ENCODE measurements at regions of chr19 and their contacts with region 1.

Region 1: DNA sequence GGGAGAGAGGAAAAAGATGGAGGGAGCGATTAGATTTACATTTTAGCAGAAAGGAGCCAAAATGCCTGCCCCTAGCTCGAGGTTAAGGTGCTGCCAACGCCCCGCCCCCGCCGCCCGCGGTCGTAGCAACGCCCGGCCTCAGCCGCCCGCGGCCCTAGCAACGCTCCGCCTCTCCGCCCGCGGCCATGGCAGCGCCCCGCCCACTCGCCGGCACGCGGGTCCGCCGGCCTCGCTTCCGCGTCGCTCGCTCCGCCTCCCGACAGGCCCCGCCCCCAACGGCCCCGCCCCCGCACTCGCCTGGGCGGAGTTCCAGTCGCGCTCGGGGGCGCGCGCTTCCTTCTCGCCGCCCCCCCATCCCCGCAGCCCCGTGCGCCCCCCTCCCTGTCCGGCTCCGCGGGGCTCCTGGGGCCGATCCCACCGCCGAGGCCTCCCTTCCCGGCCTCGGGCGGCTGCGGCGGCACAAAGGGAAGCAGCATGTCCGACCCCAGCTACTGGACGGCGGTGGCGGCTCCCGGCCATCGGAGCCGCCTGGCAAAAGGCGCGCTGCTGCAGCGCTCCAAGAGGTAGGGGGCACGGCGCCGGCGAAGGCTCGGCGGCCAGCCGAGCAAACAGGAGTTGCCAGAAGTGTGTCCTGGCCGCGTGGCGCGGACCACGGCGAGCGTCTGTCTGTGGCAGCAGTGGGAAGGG is 20.3 kb downstream of the MAST3 start:
- DNase-seq: peak; percentile 97
- ATAC-seq: peak; percentile 79
- H3K4me3 Mint-ChIP-seq: peak overlapping the region; percentile 74
- H3K27ac Mint-ChIP-seq: peak overlapping the region; percentile 84
- H3K4me1 Mint-ChIP-seq: peaks cover 35% of the 10 kb centered on the region
- H3K27me3 Mint-ChIP-seq: no peaks in the 10 kb centered on the region

Region 2: GRCh38 chr19:17718947-17719711 is 398.7 kb before region 1 on chr19 and contains the start of gene MAP1S:
- CTCF ChIA-PET with region 1: no interaction called
- POLR2A ChIA-PET with region 1: no interaction called
- intact Hi-C with region 1: loop called in 1 of 2 experiments (anchors 1 kb)
- DNase-seq: peak; percentile 86
- ATAC-seq: peak; percentile 83
- H3K4me3 Mint-ChIP-seq: peak within 1 kb of the TSS; percentile 81
- H3K27ac Mint-ChIP-seq: peak within 1 kb of the TSS; percentile 88
- H3K4me1 Mint-ChIP-seq: peaks cover 35% of the 10 kb centered on the region
- H3K27me3 Mint-ChIP-seq: no peaks in the 10 kb centered on the region
- total RNA-seq, gene MAP1S: 57.6 to 79.3 TPM

Region 3: DNA sequence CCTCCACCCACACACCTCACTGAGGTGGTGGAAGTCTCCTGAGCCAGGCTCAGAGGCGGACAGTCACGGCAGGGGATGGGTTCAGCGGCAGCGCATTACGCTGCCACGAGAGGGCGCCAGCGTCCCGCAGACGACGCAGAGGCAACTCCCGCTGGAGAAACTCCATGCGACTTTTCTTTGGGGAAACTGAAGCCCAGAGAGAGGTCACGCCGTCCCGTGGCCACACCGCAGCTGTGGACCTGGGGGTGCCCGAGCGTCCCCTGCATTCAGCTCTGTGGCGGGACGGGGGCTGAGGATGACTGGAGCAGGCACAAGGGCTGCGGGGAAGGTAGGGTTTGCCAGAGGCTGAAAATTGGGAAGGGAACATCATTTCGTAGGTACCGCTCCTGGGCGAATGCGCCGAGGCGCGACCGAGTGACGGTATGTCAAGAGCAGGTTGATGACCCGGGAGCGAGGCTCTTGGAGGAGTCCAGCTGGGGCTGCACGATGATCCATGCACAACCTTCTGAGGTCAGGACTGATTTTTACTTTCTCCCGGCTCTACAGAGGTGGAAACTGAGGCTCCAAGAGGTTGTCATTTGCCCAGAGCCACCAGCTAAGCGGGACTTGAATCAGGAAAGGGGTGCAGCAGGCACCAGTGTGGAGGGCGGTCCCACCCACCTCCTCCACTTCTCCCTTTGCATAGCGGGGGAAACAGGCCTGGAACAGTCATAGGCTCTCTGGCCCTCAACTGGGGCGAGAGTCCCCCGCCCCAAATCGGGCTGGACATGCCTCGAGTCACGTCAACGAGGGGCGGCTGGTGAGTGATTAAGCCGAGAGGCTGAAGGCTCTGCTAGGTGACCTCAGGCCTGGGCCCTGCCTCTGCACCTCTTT is 110.6 kb before region 1 on chr19:
- CTCF ChIA-PET with region 1: interaction called, 3 read pairs
- POLR2A ChIA-PET with region 1: no interaction called
- intact Hi-C with region 1: loop called in 1 of 2 experiments (anchors 1 kb)
- DNase-seq: peak; percentile 89
- ATAC-seq: peak; percentile 72
- H3K4me3 Mint-ChIP-seq: peak overlapping the region; percentile 73
- H3K27ac Mint-ChIP-seq: peak overlapping the region; percentile 81
- H3K4me1 Mint-ChIP-seq: peaks cover 31% of the 10 kb centered on the region
- H3K27me3 Mint-ChIP-seq: no peaks in the 10 kb centered on the region

Region 4: GRCh38 chr19:18160971-18161635 is 43.3 kb after region 1 on chr19:
- CTCF ChIA-PET with region 1: interaction called, 5 read pairs
- POLR2A ChIA-PET with region 1: no interaction called
- intact Hi-C with region 1: loop called in 1 of 2 experiments (anchors 2 kb)
- DNase-seq: peak; percentile 89
- ATAC-seq: peak; percentile 93
- H3K4me3 Mint-ChIP-seq: peak overlapping the region; percentile 70
- H3K27ac Mint-ChIP-seq: no peak overlapping the region
- H3K4me1 Mint-ChIP-seq: peaks cover 9% of the 10 kb centered on the region
- H3K27me3 Mint-ChIP-seq: no peaks in the 10 kb centered on the region

Region 5: DNA sequence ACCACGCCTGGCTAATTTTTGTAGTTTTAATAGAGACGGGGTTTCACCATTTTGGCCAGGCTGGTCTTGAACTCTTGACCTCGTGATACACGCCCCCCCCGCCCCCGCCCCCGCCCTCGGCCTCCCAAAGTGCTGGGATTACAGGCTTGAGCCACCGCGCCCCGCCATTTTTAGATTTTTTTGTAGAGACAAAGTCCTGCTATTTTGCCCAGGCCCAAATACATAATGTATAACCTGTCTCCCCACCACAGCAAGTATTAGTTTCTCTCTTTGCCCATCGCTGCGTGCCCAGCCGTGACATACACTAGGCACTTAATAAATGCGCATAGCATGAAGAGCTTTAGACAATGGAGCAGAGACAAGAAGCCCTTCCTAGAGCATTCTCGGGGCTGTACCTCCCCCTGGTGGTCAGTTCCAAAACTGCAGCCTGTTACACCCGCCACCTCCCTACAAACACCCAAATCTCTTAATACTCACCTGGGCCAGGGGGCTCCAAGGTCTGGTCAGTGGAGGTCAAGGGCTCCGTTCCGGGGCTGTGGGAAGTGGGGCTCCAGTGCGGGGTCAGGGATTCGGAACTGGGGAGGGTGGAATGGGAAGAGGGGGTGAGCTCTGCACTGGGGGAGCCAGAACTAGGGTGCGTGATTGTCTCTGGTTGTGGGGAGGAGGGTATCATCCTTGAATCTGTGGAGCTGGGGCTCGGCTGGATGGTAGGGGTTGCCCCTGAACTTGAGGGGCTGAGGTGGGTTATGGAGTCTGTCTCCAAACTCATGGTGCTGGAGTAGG is 133.9 kb after region 1 on chr19:
- CTCF ChIA-PET with region 1: interaction called, 5 read pairs
- POLR2A ChIA-PET with region 1: no interaction called
- intact Hi-C with region 1: loop called in 1 of 2 experiments (anchors 1 kb)
- DNase-seq: peak; percentile 89
- ATAC-seq: peak; percentile 95
- H3K4me3 Mint-ChIP-seq: no peak overlapping the region
- H3K27ac Mint-ChIP-seq: no peak overlapping the region
- H3K4me1 Mint-ChIP-seq: no peaks in the 10 kb centered on the region
- H3K27me3 Mint-ChIP-seq: peaks cover 21% of the 10 kb centered on the region

Region 6: DNA sequence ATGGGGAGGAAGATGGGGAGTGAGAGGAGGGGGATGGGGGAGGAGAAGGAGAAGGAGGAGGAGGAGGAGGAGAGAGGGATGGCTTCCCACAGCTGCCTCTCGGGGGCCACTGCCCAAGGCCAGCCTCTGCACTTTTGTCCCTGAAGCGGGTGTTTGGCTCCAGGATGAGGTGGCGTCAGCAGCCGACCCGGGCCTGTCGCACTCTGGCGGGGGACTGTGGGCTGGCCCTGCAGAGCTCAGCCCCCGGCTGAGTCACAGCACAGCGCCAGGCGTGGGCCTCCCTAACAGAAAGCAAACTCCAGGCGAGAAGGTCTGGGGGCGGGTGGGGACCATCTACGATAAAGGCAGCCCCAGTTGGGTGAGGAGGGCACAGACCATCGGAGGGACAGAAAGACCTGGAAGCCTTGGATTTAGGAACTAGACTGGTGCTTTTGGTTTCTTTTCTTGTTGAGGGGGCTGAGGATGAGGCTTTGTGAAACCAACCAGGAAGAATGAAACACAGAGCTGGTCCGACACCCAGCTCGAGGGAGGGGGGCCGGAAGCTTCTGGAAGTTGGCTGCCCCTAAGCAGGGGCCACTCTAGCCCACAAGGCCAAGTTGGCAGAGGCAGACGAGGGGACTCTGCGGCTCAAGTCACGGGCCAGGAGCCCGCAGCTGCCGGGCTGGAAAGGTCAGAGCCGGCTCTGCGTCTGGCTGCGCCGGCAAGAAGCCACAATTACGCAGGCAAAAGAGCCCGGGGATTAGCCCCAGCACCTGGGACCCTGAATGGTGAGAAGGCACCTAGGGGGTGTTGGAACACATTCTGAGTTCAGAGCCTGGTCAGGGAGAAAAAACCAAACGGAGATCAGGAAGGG is 186.8 kb after region 1 on chr19:
- CTCF ChIA-PET with region 1: no interaction called
- POLR2A ChIA-PET with region 1: no interaction called
- intact Hi-C with region 1: no loop called
- DNase-seq: peak; percentile 93
- ATAC-seq: peak; percentile 81
- H3K4me3 Mint-ChIP-seq: peak overlapping the region; percentile 84
- H3K27ac Mint-ChIP-seq: peak overlapping the region; percentile 97
- H3K4me1 Mint-ChIP-seq: peaks cover 50% of the 10 kb centered on the region
- H3K27me3 Mint-ChIP-seq: no peaks in the 10 kb centered on the region

Region 7: GRCh38 chr19:18373892-18374629 is 256.2 kb after region 1 on chr19:
- CTCF ChIA-PET with region 1: no interaction called
- POLR2A ChIA-PET with region 1: no interaction called
- intact Hi-C with region 1: no loop called
- DNase-seq: peak; percentile 73
- ATAC-seq: peak; percentile 84
- H3K4me3 Mint-ChIP-seq: no peak overlapping the region
- H3K27ac Mint-ChIP-seq: peak overlapping the region; percentile 48
- H3K4me1 Mint-ChIP-seq: peaks cover 8% of the 10 kb centered on the region
- H3K27me3 Mint-ChIP-seq: peaks cover 6% of the 10 kb centered on the region

Measured in activated CD4-positive, alpha-beta T cell treated with anti-CD3 and anti-CD28 coated beads for 36 hours (primary cell).